Activated naive CD4-positive, alpha-beta T cell treated with anti-CD3 and anti-CD28 coated beads for 36 hours (primary cell): ENCODE measurements at regions of chr12 and their contacts with region 1.

Region 1: DNA sequence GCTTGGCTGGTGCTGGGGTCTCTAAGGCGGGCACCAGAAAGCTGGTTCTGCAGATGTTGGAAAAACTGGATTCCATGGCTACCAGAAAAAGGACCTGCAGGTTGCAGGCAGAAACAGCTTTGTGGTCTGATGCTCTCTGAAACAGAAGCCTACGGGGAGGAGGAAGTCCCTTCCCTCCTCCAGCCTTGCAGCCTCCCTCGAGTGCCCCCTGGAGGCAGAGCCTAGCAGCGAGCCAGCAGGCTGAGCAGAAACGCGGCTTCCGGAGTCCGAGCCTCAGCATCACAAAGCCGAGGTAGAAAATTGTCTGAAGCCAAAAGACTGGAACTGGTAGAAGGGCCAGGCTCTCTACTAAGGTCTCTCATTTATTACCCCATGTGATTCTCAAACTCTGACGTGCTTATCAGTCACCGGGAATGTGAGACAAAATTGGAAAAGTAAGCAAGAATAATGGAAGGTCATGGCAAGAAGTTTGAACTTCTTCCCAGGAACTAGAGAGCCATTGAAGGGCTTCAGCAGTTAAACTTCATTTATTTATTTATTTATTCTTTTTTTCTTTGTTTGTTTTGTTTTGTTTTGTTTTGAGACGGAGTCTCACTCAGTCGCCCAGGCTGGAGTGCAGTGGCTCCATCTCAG is 82.2 kb upstream of the CPSF6 start:
- DNase-seq: peak; percentile 96
- H3K4me3 Mint-ChIP-seq: peak overlapping the region; percentile 43
- H3K27ac Mint-ChIP-seq: no peak overlapping the region
- H3K4me1 Mint-ChIP-seq: peaks cover 51% of the 10 kb centered on the region
- H3K27me3 Mint-ChIP-seq: no peaks in the 10 kb centered on the region

Region 2: DNA sequence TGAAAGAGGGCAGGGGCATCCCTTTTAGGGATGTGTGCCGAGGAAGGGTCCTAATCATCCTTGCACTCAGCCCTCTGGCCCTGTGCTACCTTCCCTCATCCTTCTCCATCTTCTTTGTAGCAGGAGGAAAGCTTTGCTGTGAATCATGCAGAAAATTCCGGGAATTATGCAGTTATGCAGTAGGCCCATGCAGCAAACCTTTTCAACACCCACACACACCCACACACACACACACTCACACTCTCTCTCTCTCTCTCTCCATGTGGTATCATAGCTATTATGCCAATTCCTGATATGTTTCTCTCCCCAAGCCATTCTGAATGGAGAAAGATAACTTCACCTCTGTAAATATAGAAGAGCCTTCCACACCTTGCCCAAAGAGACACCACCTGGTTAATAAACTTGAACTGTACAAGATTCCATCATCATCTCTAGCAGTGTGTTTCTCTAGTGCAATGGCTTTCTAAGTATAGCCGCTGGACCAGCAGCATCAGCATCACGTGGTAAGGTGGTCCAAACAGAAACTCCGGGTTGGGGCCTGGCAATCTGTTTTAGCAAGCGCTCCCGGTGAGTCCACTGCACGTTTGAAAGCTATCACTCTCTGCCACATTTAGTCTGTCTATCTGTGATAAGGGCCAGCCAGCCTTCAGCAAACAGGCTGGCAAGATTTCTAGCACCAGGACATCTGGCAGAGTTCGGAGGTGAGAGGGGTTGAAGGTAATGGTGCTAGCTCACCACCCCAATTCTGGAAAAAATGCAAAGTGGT is 291.6 kb before region 1 on chr12:
- CTCF ChIA-PET with region 1: interaction called, 3 read pairs
- intact Hi-C with region 1: loop called (anchors 5 kb)
- DNase-seq: no peak
- H3K4me3 Mint-ChIP-seq: no peak overlapping the region
- H3K27ac Mint-ChIP-seq: no peak overlapping the region
- H3K4me1 Mint-ChIP-seq: peaks cover 6% of the 10 kb centered on the region
- H3K27me3 Mint-ChIP-seq: no peaks in the 10 kb centered on the region

Region 3: GRCh38 chr12:69239352-69239921 is 82.3 kb after region 1 on chr12 and contains the start of gene CPSF6:
- CTCF ChIA-PET with region 1: interaction called, 12 read pairs
- intact Hi-C with region 1: loop called (anchors 1 kb)
- DNase-seq: peak; percentile 97
- H3K4me3 Mint-ChIP-seq: peak within 1 kb of the TSS; percentile 91
- H3K27ac Mint-ChIP-seq: peak within 1 kb of the TSS; percentile 98
- H3K4me1 Mint-ChIP-seq: peaks cover 47% of the 10 kb centered on the region
- H3K27me3 Mint-ChIP-seq: no peaks in the 10 kb centered on the region
- total RNA-seq, gene CPSF6: 73.7 to 75.7 TPM

Region 4: DNA sequence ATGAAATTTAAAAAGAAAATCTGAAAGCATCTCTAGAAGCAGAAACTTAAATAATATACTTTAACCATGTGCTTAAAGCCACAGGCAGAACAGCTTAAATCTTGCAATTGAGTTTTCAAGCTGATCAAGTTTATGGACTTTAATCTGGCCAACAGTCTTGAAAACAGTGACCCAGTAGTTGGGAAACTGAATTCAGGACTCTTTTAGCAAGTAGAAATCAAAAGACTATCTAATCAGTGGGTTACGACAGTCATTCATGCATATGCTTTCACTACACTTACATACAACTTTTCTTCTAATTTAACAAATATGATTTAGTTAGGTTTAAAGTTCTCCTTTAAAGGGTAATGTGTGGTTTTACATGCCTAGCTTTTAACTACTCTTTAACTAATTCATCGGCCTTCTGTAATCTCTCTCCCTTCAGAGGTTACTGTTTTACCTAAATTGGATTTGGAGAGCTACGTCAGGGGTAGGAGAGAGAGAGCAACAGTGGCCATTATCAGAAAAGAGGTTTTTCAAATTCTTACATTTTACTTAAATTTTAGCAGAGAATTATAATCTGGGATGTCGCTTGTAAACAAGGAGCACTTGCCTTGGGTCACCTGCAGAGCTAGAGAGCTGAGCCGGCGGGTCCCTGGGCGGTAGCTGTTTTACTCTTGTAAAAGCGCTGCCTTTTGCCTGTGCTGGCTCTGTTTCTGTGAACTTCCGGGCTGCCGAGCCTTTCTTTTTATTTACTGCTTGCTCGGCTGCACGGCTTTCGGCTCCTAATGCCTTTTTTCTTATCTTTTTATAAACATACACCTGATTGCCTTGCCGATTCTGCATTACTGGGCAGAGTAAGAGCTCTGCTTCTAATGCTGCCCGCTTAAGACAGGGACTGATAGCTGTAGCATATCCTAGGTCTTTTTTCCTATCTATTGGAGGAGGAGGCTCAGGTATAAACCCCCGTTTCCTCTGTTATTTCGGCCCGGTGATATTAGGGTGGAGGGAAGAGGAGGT is 173.6 kb after region 1 on chr12:
- CTCF ChIA-PET with region 1: interaction called, 7 read pairs
- intact Hi-C with region 1: loop called (anchors 1 kb)
- DNase-seq: peak; percentile 74
- H3K4me3 Mint-ChIP-seq: peak overlapping the region; percentile 80
- H3K27ac Mint-ChIP-seq: peak overlapping the region; percentile 90
- H3K4me1 Mint-ChIP-seq: peaks cover 60% of the 10 kb centered on the region
- H3K27me3 Mint-ChIP-seq: no peaks in the 10 kb centered on the region

Region 5: DNA sequence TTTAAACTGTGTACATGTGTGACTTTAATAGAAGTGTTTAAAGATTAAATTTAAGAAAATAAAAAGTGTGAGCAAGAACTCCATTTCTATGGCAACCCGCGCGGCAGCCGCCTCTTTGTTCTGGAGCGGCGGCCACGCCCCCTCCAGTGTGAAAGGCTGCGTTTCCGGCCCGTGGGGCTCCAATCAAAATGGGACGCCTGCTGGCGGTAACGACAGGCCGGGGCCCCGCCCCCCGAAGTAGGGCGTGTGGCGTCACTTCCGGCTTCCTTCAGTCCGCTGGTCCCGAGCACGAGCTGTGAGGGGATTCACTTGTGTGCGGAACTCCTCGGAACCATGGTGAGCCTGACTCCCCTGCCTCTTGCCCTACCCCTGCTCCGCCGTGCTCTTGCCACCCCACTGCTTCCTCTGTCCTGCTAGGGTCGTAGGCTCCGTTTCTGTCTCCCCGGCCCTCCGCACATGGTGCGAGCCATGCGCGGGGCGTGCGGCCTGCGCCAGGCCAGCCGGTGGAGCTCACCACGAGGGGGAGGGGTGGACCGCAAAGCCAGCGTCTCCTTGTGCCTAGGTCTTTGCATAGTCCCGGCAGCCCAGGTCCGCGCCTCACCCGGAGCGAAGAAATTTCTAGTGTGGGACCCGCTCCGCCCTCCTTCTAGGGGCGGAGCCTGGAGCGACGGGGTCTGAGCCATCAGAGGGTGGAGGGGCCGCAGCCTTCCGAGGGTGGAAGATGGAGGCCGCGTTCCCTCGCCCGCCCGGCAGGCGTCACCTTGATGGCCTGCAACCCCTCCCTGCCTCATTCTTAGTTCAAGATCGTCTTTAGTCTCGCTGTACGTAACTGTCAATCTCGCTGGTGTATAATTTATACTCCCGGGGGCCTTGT is 428.3 kb after region 1 on chr12 and contains the start of gene CCT2:
- CTCF ChIA-PET with region 1: no interaction called
- intact Hi-C with region 1: loop called (anchors 1 kb)
- DNase-seq: peak; percentile 97
- H3K4me3 Mint-ChIP-seq: peak within 1 kb of the TSS; percentile 86
- H3K27ac Mint-ChIP-seq: peak within 1 kb of the TSS; percentile 92
- H3K4me1 Mint-ChIP-seq: peaks cover 27% of the 10 kb centered on the region
- H3K27me3 Mint-ChIP-seq: no peaks in the 10 kb centered on the region
- total RNA-seq, gene CCT2: 268 to 280 TPM

Region 6: GRCh38 chr12:70242695-70243509 is 1085.8 kb after region 1 on chr12 and contains the start of gene CNOT2:
- CTCF ChIA-PET with region 1: no interaction called
- intact Hi-C with region 1: loop called (anchors 1 kb)
- DNase-seq: peak; percentile 94
- H3K4me3 Mint-ChIP-seq: peak within 1 kb of the TSS; percentile 99
- H3K27ac Mint-ChIP-seq: peak within 1 kb of the TSS; percentile 100
- H3K4me1 Mint-ChIP-seq: peaks cover 48% of the 10 kb centered on the region
- H3K27me3 Mint-ChIP-seq: no peaks in the 10 kb centered on the region
- total RNA-seq, gene CNOT2: 66.0 to 66.2 TPM